WTC11 (cell line): ENCODE measurements at regions of chr20 and their contacts with region 1.

Region 1: DNA sequence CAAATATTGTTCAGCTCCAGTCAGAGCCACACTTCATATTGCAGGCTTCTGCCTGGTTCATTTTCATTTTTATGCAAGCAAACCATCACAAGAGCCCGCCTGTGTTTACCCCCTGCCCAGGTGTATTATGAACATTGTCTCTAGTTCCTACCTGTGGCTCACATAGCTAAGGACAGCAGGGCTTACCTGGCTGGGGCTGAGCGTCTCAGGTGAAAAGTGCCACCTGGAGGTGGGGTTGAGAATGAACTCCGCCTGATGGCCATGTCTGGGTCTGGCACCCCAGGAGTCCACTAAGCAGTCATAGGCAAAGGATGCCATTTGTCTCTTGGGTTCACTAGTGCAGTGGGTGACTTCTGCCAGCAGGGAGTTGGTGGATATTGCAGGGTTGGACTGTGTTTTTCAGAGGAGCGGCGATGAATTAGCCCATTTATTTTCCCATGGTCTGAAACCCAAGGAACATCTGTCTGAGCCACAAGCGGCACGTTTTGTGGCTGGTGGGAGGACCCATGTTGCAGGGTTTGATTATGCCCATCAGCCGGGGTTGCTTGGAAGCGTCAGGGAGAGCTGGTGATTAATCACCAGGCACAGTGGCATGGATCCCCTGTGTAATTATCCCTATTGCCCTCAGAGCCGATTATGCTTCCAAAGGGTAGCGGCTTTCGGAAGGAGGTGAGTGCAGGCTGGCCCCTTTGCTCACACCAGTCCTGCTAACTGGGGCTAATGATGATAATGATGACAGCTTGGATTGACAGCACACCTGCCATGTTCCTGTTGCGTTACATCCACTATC is 92.1 kb downstream of the CDH26 start:
- DNase-seq: peak; percentile 64
- ATAC-seq: peak; percentile 97
- H3K4me3 Mint-ChIP-seq: no peak overlapping the region
- H3K27ac Mint-ChIP-seq: no peak overlapping the region
- H3K4me1 Mint-ChIP-seq: no peaks in the 10 kb centered on the region
- H3K27me3 Mint-ChIP-seq: peaks cover 14% of the 10 kb centered on the region
- CTCF ChIP-seq: peak; percentile 24; the same call in 1 of the 2 replicates

Region 2: DNA sequence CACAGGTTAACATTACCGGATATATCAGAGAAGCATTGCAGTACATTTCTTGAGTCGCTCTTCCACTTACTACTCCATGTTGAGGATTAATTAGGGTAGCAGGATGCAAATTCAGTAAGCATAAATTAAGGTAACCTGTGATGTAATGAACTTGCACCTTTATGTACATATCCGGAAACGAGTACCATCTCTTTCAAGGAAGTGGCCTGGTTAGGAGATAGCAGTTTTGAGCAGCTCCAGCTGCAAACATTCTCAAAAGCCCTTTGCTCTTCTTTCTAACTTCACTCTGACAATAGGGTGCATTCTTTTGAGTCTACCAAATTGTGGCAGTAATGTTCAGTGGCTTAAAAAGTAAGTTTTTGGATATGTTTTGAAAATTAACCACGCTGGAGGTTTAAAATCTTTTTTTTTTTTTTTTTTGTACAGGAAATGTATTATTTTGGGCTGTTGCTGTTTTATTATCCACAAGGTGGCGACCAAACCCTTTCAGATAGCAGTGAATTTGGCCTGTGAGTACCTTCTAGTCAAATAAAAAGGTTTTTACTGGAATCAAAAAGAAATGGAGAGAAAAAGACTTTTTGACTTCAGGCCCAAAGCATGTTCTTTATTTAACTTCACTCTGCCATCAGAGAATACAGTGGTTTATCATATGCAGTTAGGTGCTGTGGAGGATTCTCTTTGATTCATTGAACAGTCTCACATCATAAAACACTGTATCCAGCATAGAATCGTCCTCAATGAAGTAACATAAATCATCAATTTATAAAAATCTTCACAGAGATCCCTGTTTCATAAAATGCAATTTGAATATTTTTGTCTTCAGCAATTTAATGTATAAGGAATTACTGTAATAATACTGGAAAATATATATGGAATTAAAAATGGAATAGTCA is 101.3 kb before region 1 on chr20:
- CTCF ChIA-PET with region 1: interaction called, 10 read pairs
- POLR2A ChIA-PET with region 1: no interaction called
- DNase-seq: no peak
- ATAC-seq: no peak
- H3K4me3 Mint-ChIP-seq: no peak overlapping the region
- H3K27ac Mint-ChIP-seq: no peak overlapping the region
- H3K4me1 Mint-ChIP-seq: peaks cover 9% of the 10 kb centered on the region
- H3K27me3 Mint-ChIP-seq: no peaks in the 10 kb centered on the region
- CTCF ChIP-seq: peak; percentile 10; the same call in 1 of the 2 replicates

Region 3: GRCh38 chr20:59955132-59955796 is 95.1 kb before region 1 on chr20:
- CTCF ChIA-PET with region 1: interaction called, 10 read pairs
- POLR2A ChIA-PET with region 1: no interaction called
- DNase-seq: no peak
- ATAC-seq: peak; percentile 39; the same call in 1 of the 2 replicates
- H3K4me3 Mint-ChIP-seq: no peak overlapping the region
- H3K27ac Mint-ChIP-seq: peak overlapping the region; percentile 49; the same call in 1 of the 2 replicates
- H3K4me1 Mint-ChIP-seq: peaks cover 6% of the 10 kb centered on the region
- H3K27me3 Mint-ChIP-seq: peaks cover 8% of the 10 kb centered on the region
- CTCF ChIP-seq: no peak

Region 4: DNA sequence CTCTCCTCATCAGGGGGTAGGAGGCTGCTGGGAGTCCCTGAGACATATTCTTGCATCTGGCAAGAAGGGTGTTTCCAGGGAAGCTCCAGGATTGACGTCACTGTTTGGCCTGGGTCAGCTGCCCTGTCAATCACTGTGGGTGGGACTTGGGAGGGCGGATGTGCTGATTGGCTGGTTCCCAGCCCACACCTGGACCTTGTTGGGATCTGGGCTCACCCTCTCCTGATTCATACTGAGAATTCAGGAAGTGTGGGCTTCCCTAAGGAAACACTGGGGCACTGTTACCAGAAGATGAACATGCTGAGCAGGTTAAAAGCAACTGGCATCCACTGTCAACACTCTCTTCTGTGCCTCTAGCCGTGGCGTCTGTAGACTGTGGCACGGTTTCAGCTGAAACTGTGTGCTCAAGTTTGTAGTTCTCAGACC is 55.6 kb before region 1 on chr20:
- CTCF ChIA-PET with region 1: interaction called, 16 read pairs
- POLR2A ChIA-PET with region 1: no interaction called
- DNase-seq: peak; percentile 78
- ATAC-seq: peak; percentile 97
- H3K4me3 Mint-ChIP-seq: peak overlapping the region; percentile 69
- H3K27ac Mint-ChIP-seq: peak overlapping the region; percentile 94
- H3K4me1 Mint-ChIP-seq: peaks cover 35% of the 10 kb centered on the region
- H3K27me3 Mint-ChIP-seq: peaks cover 14% of the 10 kb centered on the region
- CTCF ChIP-seq: no peak

Region 5: DNA sequence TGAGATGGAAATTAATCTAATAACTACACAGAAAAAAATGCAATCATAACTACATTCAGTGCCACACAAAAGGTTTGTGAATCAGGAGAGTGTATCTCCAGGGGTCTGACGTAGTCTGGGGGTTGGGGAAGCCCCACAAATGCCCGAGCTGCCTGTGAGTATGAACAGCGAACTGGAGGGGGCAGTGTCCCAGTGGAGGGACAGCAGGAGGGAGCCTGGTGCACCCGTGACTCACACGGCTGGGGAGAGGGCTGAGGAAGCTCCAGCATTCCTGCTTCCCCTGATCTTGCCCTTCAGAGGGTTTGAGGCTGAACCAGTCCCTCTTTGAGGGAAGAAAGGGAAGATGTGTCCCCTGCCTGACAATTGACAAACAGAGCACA is 13.2 kb before region 1 on chr20:
- CTCF ChIA-PET with region 1: interaction called, 10 read pairs
- POLR2A ChIA-PET with region 1: no interaction called
- DNase-seq: no peak
- ATAC-seq: peak; percentile 67
- H3K4me3 Mint-ChIP-seq: no peak overlapping the region
- H3K27ac Mint-ChIP-seq: no peak overlapping the region
- H3K4me1 Mint-ChIP-seq: peaks cover 30% of the 10 kb centered on the region
- H3K27me3 Mint-ChIP-seq: peaks cover 36% of the 10 kb centered on the region
- CTCF ChIP-seq: no peak

Region 6: DNA sequence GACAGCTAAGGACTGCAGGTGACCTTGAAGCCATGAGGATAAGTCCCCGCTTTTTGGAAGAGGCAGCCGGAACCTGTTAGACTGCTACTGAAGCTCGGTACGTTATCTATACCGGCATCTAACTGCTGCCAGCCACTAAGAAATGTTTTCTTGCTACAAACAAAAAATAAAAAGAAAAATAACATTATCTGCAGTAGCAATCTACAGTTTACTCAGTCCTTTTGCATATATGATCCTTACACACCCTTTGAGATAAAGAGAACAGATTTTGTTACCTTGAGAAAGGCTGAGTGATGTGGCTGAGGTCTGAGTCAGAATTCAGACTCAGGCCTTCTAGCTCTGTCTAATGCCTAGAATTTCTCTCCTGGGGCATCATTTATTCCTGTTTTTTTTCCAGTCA is 222.5 kb after region 1 on chr20:
- CTCF ChIA-PET with region 1: no interaction called
- POLR2A ChIA-PET with region 1: no interaction called
- DNase-seq: no peak
- ATAC-seq: no peak
- H3K4me3 Mint-ChIP-seq: no peak overlapping the region
- H3K27ac Mint-ChIP-seq: no peak overlapping the region
- H3K4me1 Mint-ChIP-seq: peaks cover 12% of the 10 kb centered on the region
- H3K27me3 Mint-ChIP-seq: peaks cover 37% of the 10 kb centered on the region
- CTCF ChIP-seq: no peak